ENCODE measurements at regions of chr11 and their contacts with region 1.

Region 1: GRCh38 chr11:65134386-65135253 is at the start of gene SYVN1:
- DNase-seq: peak; percentile 91 to 97
- H3K4me3 ChIP-seq: peak within 1 kb of the TSS; percentile 89 to 99
- H3K27ac ChIP-seq: peak within 1 kb of the TSS; percentile 95 to 99
- H3K4me1 ChIP-seq: peaks cover 11 to 24% of the 10 kb centered on the region in 2 donors
- H3K27me3 ChIP-seq: no peaks in the 10 kb centered on the region
- CTCF ChIP-seq: no peak
- total RNA-seq, gene SYVN1: 229 TPM

Region 2: DNA sequence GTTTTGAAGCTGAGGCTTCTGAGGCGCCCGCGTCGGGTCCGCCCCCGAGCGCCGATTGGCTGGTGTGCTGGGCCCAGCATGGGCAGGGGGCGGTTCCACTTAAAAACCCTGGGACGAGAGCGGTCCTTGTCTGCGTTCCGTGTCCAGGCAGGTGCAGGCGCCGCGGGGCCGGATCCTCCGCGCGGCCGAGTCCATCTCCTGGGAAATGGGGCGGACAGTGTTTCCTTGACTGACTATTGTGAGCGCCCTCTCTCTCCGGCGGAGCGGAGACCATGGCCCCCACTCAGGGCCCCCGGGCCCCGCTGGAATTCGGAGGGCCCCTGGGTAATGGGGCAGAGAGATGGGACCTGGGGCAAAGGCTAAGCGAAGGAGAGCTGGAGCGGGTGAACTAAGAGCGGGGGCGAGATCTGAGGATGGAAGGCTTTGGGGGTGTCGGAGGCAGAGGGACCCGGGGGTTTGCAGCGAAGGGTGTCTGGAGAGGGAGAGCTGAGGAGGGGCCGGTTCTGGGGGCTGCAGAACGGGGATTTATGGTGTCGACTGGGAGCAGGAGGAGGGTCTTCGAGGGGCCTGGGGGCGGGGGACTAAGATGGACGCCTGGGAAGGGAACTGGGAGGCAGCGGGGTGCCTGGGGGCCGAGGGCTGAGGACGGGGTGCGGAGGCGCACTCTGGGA is 22.7 kb before region 1 on chr11 and contains the start of gene TM7SF2:
- intact Hi-C with region 1: loop called (anchors 2 kb)
- DNase-seq: peak; percentile 84 to 96
- H3K4me3 ChIP-seq: peak within 1 kb of the TSS; percentile 54 to 66
- H3K27ac ChIP-seq: peak within 1 kb of the TSS; percentile 51 to 56
- H3K4me1 ChIP-seq: peaks cover 24 to 36% of the 10 kb centered on the region in 2 donors
- H3K27me3 ChIP-seq: no peaks in the 10 kb centered on the region
- CTCF ChIP-seq: no peak
- total RNA-seq, gene TM7SF2: 10.6 TPM

Region 3: DNA sequence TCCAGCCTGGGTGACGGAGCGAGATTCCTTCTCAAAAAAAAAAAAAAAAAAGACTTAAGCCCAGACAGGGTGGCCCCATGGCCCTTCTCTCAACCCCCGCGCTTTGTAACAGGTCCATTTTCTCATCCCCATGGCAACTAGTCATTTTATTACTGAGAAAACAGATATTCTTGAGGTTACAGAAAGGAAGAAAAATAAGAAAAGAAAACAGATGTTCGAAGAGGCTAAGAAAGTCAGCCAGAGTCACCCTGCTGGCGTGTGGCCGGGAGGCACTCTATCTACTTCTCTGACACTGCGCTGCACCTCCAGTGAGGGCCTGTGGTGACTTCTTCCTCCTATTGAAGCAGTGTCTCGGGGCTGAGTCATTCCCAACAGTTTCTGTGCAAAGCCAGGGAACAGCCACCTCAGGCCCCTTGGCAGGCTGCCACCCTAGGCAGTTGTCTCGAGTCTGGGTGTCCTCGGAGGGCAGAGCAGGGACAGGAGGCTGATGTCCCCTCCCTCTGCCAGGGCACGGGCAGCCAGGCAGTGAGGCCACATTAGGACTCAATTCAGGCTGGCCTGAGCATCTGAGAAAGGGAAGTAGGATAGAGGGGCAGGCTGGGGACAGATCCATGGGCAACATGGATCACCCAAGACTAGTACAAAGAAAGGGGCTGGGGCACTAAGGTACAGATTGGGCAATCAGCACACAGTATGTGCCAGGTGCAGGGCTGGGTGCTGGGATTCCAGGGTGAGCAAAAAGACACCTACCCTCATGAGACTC is 16.1 kb after region 1 on chr11:
- intact Hi-C with region 1: loop called (anchors 2 kb)
- DNase-seq: peak; percentile 90 to 96
- H3K4me3 ChIP-seq: peak overlapping the region in 1 of 2 donors; percentile 19
- H3K27ac ChIP-seq: peak overlapping the region; percentile 68 to 73
- H3K4me1 ChIP-seq: peaks cover 0 to 11% of the 10 kb centered on the region in 2 donors
- H3K27me3 ChIP-seq: no peaks in the 10 kb centered on the region
- CTCF ChIP-seq: no peak

Region 4: GRCh38 chr11:65180877-65181568 is 46.4 kb after region 1 on chr11:
- intact Hi-C with region 1: loop called (anchors 1 kb)
- DNase-seq: peak in 1 of 2 donors; percentile 75
- H3K4me3 ChIP-seq: peak overlapping the region; percentile 70 to 95
- H3K27ac ChIP-seq: peak overlapping the region; percentile 90 to 95
- H3K4me1 ChIP-seq: peaks cover 2 to 9% of the 10 kb centered on the region in 2 donors
- H3K27me3 ChIP-seq: no peaks in the 10 kb centered on the region
- CTCF ChIP-seq: peak; percentile 31 to 59 (median 48)

Region 5: DNA sequence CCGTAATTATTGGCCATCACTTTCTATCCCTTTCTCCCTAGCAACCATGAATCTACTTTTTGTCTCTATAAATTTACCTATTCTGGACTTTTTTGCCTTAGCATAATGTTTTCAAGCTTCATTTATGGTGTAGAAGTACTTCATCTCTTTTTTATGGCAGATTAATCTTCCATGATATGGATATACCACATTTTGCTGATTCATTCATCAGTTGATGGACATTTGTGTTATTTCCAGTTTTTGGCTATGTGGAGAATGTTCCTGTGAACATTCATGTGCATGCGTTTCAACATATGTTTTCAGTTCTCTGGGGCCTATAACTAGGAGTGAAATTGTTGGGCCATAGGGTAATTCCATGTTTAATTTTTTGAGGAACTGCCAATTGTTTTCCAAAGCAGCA is 59.9 kb after region 1 on chr11:
- intact Hi-C with region 1: no loop called
- DNase-seq: no peak
- H3K4me3 ChIP-seq: no peak overlapping the region
- H3K27ac ChIP-seq: no peak overlapping the region
- H3K4me1 ChIP-seq: no peaks in the 10 kb centered on the region
- H3K27me3 ChIP-seq: no peaks in the 10 kb centered on the region
- CTCF ChIP-seq: no peak